Naive thymus-derived CD4-positive, alpha-beta T cell (primary cell): ENCODE measurements at regions of chr10 and their contacts with region 1.

Region 1: GRCh38 chr10:73772280-73773151 is 9.3 kb upstream of the CHCHD1 start:
- DNase-seq: peak; percentile 75 to 90 (median 83)
- ATAC-seq: peak; percentile 80
- H3K4me3 ChIP-seq: peak overlapping the region; percentile 69
- H3K4me3 Mint-ChIP-seq: peak overlapping the region; percentile 87 to 97 (median 95)
- H3K27ac ChIP-seq: peak overlapping the region; percentile 85
- H3K27ac Mint-ChIP-seq: peak overlapping the region; percentile 89 to 97 (median 94)
- H3K4me1 ChIP-seq: peaks cover 27 to 30% of the 10 kb centered on the region in 2 donors
- H3K4me1 Mint-ChIP-seq: peaks cover 34 to 73% (median 64%) of the 10 kb centered on the region in 7 donors
- H3K27me3 ChIP-seq: no peaks in the 10 kb centered on the region
- H3K27me3 Mint-ChIP-seq: no peaks in the 10 kb centered on the region

Region 2: DNA sequence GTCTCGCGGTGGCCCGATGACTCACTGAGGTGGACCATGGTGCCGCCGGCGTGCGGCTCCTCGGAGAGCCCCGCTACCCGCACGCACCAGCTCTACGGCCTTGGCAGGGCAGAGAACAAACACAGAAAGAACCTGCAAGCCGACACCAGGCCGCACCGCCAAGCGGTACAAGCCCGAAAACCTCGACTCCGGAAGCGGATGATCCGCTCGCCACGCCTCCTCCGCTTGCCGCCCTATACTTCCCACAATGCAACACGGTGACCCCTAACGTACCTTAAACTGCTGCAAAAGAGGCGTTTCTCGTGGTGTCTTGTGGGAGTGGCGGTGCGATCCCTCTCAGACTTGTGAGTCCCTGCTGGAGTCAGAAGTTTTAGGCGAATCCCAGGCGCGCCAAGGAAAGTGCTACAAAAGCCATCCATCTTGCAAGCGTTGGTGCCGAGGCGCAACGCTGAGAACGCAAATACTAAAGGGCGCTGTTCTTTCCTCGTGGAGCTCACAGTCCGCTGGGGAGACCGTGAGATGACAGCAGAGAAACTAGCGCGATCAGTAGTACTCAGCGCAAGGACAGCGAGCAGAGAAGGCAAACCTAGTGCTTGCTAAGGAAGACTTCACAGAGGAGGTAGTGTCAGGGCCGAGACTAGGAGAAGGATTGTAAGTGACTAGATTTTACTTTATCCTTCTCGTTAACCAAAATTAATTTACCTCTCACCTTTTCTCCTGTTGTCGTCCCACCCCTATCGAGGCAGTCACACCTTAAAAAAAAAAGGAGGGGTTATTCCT is 519.9 kb before region 1 on chr10 and contains the start of gene MRPS16:
- CTCF ChIA-PET with region 1: no interaction called
- POLR2A ChIA-PET with region 1: interaction called, 4 read pairs
- intact Hi-C with region 1: loop called in 1 of 2 experiments (anchors 1 kb)
- DNase-seq: peak; percentile 75 to 95 (median 93)
- ATAC-seq: peak; percentile 98
- H3K4me3 ChIP-seq: peak within 1 kb of the TSS; percentile 94
- H3K4me3 Mint-ChIP-seq: peak within 1 kb of the TSS; percentile 95 to 100 (median 99)
- H3K27ac ChIP-seq: peak within 1 kb of the TSS; percentile 92
- H3K27ac Mint-ChIP-seq: peak within 1 kb of the TSS; percentile 91 to 97 (median 94)
- H3K4me1 ChIP-seq: peaks cover 18 to 26% of the 10 kb centered on the region in 2 donors
- H3K4me1 Mint-ChIP-seq: peaks cover 19 to 50% (median 37%) of the 10 kb centered on the region in 7 donors
- H3K27me3 ChIP-seq: no peaks in the 10 kb centered on the region
- H3K27me3 Mint-ChIP-seq: peaks cover 0 to 2% (median 0%) of the 10 kb centered on the region in 5 donors
- total RNA-seq, gene MRPS16: 29.6 to 99.9 (median 47.6) TPM

Region 3: GRCh38 chr10:73730153-73730906 is 42.2 kb before region 1 on chr10:
- CTCF ChIA-PET with region 1: interaction called, 4 read pairs
- POLR2A ChIA-PET with region 1: interaction called, 11 read pairs
- intact Hi-C with region 1: loop called (anchors 1 kb)
- DNase-seq: peak; percentile 86 to 94 (median 89)
- ATAC-seq: peak; percentile 94
- H3K4me3 ChIP-seq: peak overlapping the region; percentile 99
- H3K4me3 Mint-ChIP-seq: peak overlapping the region; percentile 95 to 100 (median 98)
- H3K27ac ChIP-seq: peak overlapping the region; percentile 82
- H3K27ac Mint-ChIP-seq: peak overlapping the region; percentile 91 to 98 (median 96)
- H3K4me1 ChIP-seq: peaks cover 5 to 10% of the 10 kb centered on the region in 2 donors
- H3K4me1 Mint-ChIP-seq: peaks cover 0 to 32% (median 21%) of the 10 kb centered on the region in 7 donors
- H3K27me3 ChIP-seq: no peaks in the 10 kb centered on the region
- H3K27me3 Mint-ChIP-seq: no peaks in the 10 kb centered on the region

Region 4: GRCh38 chr10:73785221-73785720 is 12.8 kb after region 1 on chr10 and contains the start of gene ZSWIM8:
- CTCF ChIA-PET with region 1: interaction called, 10 read pairs
- POLR2A ChIA-PET with region 1: interaction called, 185 read pairs
- intact Hi-C with region 1: loop called (anchors 1 kb)
- DNase-seq: peak; percentile 70 to 93 (median 86)
- ATAC-seq: peak; percentile 91
- H3K4me3 ChIP-seq: peak within 1 kb of the TSS; percentile 91
- H3K4me3 Mint-ChIP-seq: peak within 1 kb of the TSS; percentile 97 to 100 (median 98)
- H3K27ac ChIP-seq: peak within 1 kb of the TSS; percentile 83
- H3K27ac Mint-ChIP-seq: peak within 1 kb of the TSS; percentile 95 to 99 (median 98)
- H3K4me1 ChIP-seq: peaks cover 36 to 43% of the 10 kb centered on the region in 2 donors
- H3K4me1 Mint-ChIP-seq: peaks cover 27 to 66% (median 53%) of the 10 kb centered on the region in 7 donors
- H3K27me3 ChIP-seq: no peaks in the 10 kb centered on the region
- H3K27me3 Mint-ChIP-seq: no peaks in the 10 kb centered on the region
- total RNA-seq, gene ZSWIM8: 70.9 to 102 (median 83.2) TPM

Region 5: GRCh38 chr10:73848821-73849489 is 76.4 kb after region 1 on chr10:
- CTCF ChIA-PET with region 1: interaction called, 3 read pairs
- POLR2A ChIA-PET with region 1: no interaction called
- intact Hi-C with region 1: loop called in 1 of 2 experiments (anchors 1 kb)
- DNase-seq: peak; percentile 82 to 93 (median 88)
- ATAC-seq: peak; percentile 100
- H3K4me3 ChIP-seq: no peak overlapping the region
- H3K4me3 Mint-ChIP-seq: peak overlapping the region in 5 of 10 donors; percentile 1 to 58 (median 37)
- H3K27ac ChIP-seq: peak overlapping the region; percentile 56
- H3K27ac Mint-ChIP-seq: peak overlapping the region; percentile 75 to 97 (median 94)
- H3K4me1 ChIP-seq: peaks cover 6 to 7% of the 10 kb centered on the region in 2 donors
- H3K4me1 Mint-ChIP-seq: peaks cover 11 to 23% (median 16%) of the 10 kb centered on the region in 7 donors
- H3K27me3 ChIP-seq: no peaks in the 10 kb centered on the region
- H3K27me3 Mint-ChIP-seq: no peaks in the 10 kb centered on the region

Region 6: DNA sequence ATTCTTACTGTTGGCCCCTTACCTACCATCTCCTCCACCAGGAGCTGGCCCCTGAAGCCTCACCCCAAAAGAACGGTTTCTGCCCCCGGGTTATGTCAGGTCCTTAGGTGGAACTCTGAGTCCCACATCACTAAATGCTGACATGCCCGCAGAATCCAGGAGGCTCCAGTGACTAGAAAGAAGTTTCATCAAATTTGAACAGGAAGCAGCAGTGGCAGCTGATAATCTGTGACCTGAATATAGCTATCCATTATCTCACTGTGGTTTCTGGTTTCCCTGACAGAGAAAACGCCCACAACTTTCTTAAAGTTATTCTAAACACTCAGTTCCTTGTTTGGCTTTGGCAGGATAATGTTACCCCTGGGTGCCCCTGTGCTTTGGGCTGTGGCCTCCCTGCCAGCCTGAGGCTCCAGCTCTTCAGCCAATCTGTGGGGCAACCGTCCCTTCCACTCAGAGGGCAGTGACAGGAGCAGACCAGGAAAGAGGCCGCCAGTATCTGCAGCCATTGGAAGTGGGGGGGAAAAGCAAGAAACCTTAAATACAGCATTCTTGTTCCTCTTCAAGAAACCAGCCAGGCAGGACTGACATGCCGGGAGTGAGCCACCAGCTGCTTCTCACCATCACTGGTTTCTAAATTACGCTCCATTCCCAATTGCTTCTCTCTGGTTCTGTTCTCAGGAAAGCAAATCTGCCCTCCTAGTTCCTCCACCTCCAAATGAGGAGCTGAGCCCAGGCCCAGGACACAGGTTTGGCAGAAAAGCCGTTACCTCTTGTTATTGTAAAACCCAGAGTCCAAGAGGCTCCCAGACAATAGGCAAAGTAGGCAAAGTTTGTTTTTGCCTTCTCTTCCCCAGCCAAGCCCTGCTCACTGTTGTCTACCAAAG is 184.2 kb after region 1 on chr10:
- CTCF ChIA-PET with region 1: no interaction called
- POLR2A ChIA-PET with region 1: no interaction called
- intact Hi-C with region 1: no loop called
- DNase-seq: peak in 8 of 9 donors; percentile 34 to 61 (median 46)
- ATAC-seq: peak; percentile 81
- H3K4me3 ChIP-seq: peak overlapping the region; percentile 28
- H3K4me3 Mint-ChIP-seq: peak overlapping the region; percentile 63 to 86 (median 76)
- H3K27ac ChIP-seq: peak overlapping the region; percentile 56
- H3K27ac Mint-ChIP-seq: peak overlapping the region; percentile 58 to 94 (median 87)
- H3K4me1 ChIP-seq: peaks cover 31 to 41% of the 10 kb centered on the region in 2 donors
- H3K4me1 Mint-ChIP-seq: peaks cover 26 to 57% (median 52%) of the 10 kb centered on the region in 7 donors
- H3K27me3 ChIP-seq: no peaks in the 10 kb centered on the region
- H3K27me3 Mint-ChIP-seq: peaks cover 0 to 4% (median 0%) of the 10 kb centered on the region in 5 donors